A673 (cell line): ENCODE measurements at regions of chr10 and their contacts with region 1.

Region 1: GRCh38 chr10:101569838-101570766 is 18.0 kb downstream of the POLL start:
- DNase-seq: peak; percentile 77
- H3K4me3 ChIP-seq: peak overlapping the region; percentile 58
- H3K27ac ChIP-seq: no peak overlapping the region
- H3K4me1 ChIP-seq: peaks cover 28% of the 10 kb centered on the region
- H3K27me3 ChIP-seq: peaks cover 6% of the 10 kb centered on the region
- CTCF ChIP-seq: peak; percentile 78

Region 2: DNA sequence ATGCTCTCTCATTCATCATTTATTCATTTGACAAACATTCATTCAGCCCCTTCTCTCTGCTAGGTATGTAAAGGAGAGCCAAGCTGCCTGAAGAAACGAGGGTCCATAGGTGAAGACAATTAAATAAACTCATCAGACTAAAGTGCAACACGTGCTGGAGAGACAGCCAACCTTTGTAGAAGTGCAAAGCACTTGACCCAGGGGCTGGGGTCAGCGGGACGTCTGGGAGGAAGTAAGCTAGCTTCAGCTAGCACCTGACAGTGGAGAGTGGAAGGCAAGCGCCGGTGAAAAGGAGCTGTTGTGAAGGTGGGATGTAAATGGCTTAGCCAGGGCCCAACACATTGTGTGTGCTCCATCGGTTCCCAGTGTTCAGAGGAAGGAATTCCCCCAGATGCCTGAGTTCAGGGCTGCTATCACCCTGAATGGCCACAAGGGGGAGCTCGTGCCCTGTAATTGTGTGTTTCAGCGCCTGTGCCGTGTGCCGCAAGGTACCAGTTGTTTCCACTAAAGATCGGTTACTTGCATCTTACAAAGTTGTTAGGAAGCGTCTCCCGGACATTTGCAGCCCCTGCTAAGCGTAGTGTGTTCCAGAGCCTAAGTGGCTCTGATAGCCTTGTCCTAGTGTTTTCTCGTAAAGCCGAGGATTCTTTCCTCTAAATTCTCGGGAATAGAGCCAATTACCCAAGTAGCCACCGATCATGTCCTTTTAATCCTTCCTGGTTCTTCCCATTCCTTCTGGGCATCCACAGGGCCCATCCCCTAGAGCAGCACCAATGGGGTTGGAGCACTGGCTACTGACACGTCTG is 408.4 kb before region 1 on chr10:
- CTCF ChIA-PET with region 1: no interaction called
- POLR2A ChIA-PET with region 1: no interaction called
- intact Hi-C with region 1: loop called (anchors 5 kb)
- DNase-seq: peak; percentile 84
- H3K4me3 ChIP-seq: peak overlapping the region; percentile 32
- H3K27ac ChIP-seq: no peak overlapping the region
- H3K4me1 ChIP-seq: peaks cover 13% of the 10 kb centered on the region
- H3K27me3 ChIP-seq: no peaks in the 10 kb centered on the region
- CTCF ChIP-seq: peak; percentile 98

Region 3: DNA sequence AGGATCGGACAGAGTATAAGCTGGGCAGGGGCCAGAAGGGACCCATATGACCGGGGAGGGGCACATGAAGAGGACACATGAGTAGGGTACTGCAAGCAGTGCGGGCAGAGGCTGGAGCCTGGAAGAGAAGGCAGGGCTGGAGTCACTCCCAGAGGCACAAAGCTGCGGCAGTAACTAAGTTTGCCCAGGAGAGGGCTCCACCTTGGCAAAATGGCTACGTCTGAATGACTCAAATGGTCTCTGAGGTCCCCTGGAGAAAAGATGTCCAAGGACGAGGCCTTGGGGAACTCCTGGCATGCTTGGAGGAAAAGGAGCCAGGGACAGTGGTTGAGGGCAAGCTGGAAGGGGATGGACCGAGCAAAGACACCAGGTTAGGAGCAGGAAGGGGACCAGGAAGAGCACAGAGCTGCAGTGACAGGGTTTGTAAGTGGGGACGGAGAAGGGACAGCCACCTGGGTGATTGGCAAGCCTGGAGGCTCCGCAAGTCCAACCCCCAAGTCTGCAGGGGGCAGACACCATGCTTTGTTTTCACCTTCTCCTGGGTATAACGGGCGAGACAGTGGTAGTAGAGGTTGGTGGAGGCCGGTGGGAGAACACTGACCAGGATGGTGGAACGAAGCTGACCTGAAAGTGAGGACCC is 297.8 kb before region 1 on chr10:
- CTCF ChIA-PET with region 1: interaction called, 3 read pairs
- POLR2A ChIA-PET with region 1: no interaction called
- intact Hi-C with region 1: loop called (anchors 1 kb)
- DNase-seq: peak; percentile 80
- H3K4me3 ChIP-seq: no peak overlapping the region
- H3K27ac ChIP-seq: no peak overlapping the region
- H3K4me1 ChIP-seq: peaks cover 6% of the 10 kb centered on the region
- H3K27me3 ChIP-seq: peaks cover 3% of the 10 kb centered on the region
- CTCF ChIP-seq: peak; percentile 85

Region 4: DNA sequence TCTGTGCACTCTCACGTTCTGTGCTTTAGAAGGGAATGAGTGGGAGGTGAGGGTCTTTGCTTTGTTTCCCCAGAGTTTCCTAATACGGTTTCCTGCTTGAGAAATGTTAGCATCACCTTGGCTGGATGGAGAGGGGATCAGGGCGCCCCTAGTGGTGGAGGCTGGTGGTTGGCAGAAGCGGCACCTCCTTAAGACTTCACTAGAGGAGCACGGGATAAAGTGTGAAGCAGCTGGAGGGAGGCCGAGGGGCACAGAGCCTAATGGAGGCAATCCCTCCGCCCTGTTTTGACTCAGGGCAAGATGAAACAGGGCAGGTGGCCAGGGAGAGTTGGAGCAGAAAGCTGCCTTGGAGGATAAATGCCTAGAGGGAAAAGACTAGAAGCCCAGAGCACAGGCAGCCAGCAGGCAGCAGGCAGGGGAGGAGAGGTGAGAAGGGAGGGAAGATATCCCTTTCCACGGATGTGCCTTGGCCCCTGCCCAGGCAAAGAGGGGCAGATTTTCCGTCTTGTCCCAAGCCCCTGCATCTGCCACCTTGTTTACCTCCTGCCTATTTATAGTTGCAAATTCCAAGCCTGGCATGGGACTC is 272.1 kb before region 1 on chr10:
- CTCF ChIA-PET with region 1: interaction called, 5 read pairs
- POLR2A ChIA-PET with region 1: no interaction called
- intact Hi-C with region 1: loop called (anchors 5 kb)
- DNase-seq: peak; percentile 65
- H3K4me3 ChIP-seq: no peak overlapping the region
- H3K27ac ChIP-seq: no peak overlapping the region
- H3K4me1 ChIP-seq: no peaks in the 10 kb centered on the region
- H3K27me3 ChIP-seq: peaks cover 28% of the 10 kb centered on the region
- CTCF ChIP-seq: peak; percentile 90

Region 5: GRCh38 chr10:101749047-101750016 is 179.2 kb after region 1 on chr10:
- CTCF ChIA-PET with region 1: no interaction called
- POLR2A ChIA-PET with region 1: no interaction called
- intact Hi-C with region 1: no loop called
- DNase-seq: peak; percentile 11
- H3K4me3 ChIP-seq: no peak overlapping the region
- H3K27ac ChIP-seq: no peak overlapping the region
- H3K4me1 ChIP-seq: no peaks in the 10 kb centered on the region
- H3K27me3 ChIP-seq: no peaks in the 10 kb centered on the region
- CTCF ChIP-seq: 0 out of 2 replicates have a peak, but pooled peaks have one; percentile 22

Region 6: GRCh38 chr10:101780814-101781654 is 210.9 kb after region 1 on chr10:
- CTCF ChIA-PET with region 1: no interaction called
- POLR2A ChIA-PET with region 1: no interaction called
- intact Hi-C with region 1: no loop called
- DNase-seq: peak; percentile 84
- H3K4me3 ChIP-seq: no peak overlapping the region
- H3K27ac ChIP-seq: no peak overlapping the region
- H3K4me1 ChIP-seq: peaks cover 26% of the 10 kb centered on the region
- H3K27me3 ChIP-seq: peaks cover 10% of the 10 kb centered on the region
- CTCF ChIP-seq: peak; percentile 91

Region 7: GRCh38 chr10:102114861-102115618 is 544.9 kb after region 1 on chr10:
- CTCF ChIA-PET with region 1: no interaction called
- POLR2A ChIA-PET with region 1: no interaction called
- intact Hi-C with region 1: no loop called
- DNase-seq: peak; percentile 97
- H3K4me3 ChIP-seq: peak overlapping the region; percentile 96
- H3K27ac ChIP-seq: peak overlapping the region; percentile 81
- H3K4me1 ChIP-seq: peaks cover 58% of the 10 kb centered on the region
- H3K27me3 ChIP-seq: no peaks in the 10 kb centered on the region
- CTCF ChIP-seq: no peak